WTC11 (cell line): ENCODE measurements at regions of chr5 and their contacts with region 1.

Region 1: DNA sequence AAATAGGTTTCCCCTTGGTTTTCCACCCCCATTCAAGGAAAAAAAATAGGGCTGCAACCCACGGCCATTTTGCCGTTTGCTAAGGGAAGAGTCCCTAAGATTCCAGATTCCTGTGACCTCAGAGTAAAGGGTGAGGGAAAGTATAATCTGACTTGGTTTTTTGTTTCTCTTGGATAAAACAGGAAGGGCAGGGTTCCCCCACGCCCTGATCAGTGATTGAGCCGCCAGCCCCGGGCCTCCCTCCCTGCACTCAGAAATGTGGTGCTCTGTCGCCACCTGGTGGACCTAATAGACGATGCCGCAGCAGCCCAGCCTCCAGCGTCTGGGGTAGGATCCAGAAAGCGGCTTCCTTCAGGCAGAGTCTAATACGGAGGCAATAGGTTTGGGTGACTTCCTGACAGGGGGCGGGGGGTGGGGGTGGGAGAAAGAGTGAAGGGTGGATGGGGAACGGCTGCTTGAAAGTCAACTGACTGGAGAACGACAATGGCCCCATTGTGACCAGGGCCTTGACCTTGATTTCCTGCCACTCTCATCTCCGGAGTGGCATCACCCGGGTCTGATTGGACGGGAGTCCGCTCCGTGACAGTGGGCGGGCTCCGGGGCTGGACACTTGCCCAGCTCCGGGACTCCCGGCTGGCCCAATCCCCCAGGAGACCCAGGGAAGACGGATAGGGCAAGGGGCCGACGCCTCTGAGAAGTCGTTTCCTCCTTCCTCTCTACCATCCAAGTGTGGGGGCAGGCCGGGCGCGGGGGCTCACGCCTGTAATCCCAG is 17.8 kb upstream of the CYSTM1 start:
- DNase-seq: peak; percentile 94
- ATAC-seq: peak; percentile 91
- H3K4me3 Mint-ChIP-seq: peak overlapping the region; percentile 67
- H3K27ac Mint-ChIP-seq: no peak overlapping the region
- H3K4me1 Mint-ChIP-seq: peaks cover 28% of the 10 kb centered on the region
- H3K27me3 Mint-ChIP-seq: peaks cover 17% of the 10 kb centered on the region
- CTCF ChIP-seq: peak; percentile 86

Region 2: GRCh38 chr5:140042643-140043500 is 114.3 kb before region 1 on chr5 and contains the start of gene NRG2:
- CTCF ChIA-PET with region 1: no interaction called
- POLR2A ChIA-PET with region 1: no interaction called
- DNase-seq: peak; percentile 88
- ATAC-seq: peak; percentile 89
- H3K4me3 Mint-ChIP-seq: peak within 1 kb of the TSS; percentile 70
- H3K27ac Mint-ChIP-seq: no peak within 1 kb of the TSS
- H3K4me1 Mint-ChIP-seq: peaks cover 28% of the 10 kb centered on the region
- H3K27me3 Mint-ChIP-seq: peaks cover 86% of the 10 kb centered on the region
- CTCF ChIP-seq: no peak
- total RNA-seq, gene NRG2: 0.44 to 0.73 TPM (median 0.46 TPM) in 3 replicates

Region 3: DNA sequence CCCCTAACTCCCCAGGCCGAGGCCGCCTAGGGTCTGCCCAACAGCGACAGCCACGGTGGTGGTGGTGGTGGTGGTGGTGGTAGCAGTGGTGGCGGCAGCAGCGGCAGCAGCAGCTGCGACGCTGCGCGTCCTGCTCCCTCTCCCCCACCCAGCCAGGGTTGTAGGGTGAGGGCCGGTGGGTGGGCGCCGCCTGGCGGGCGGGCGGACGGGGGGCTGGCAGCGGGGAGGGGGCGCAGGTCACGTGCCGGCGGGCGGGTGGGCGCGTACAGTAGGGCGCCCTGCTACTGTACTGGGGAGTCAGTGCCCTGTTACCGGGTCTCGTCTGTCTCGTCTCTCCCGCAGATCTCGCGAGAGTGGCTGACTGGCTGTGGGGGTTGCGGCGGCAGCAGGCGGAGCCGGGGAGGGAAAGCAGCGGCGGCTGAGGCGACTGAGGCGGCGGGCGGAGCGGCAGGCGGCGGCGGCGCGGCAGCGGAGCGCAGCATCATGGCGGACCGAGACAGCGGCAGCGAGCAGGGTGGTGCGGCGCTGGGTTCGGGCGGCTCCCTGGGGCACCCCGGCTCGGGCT is 43.4 kb before region 1 on chr5 and contains the start of gene PURA:
- CTCF ChIA-PET with region 1: interaction called, 10 read pairs
- POLR2A ChIA-PET with region 1: no interaction called
- DNase-seq: peak; percentile 96
- ATAC-seq: peak; percentile 85
- H3K4me3 Mint-ChIP-seq: peak within 1 kb of the TSS; percentile 86
- H3K27ac Mint-ChIP-seq: peak within 1 kb of the TSS; percentile 73; the same call in 1 of the 2 replicates
- H3K4me1 Mint-ChIP-seq: peaks cover 73% of the 10 kb centered on the region
- H3K27me3 Mint-ChIP-seq: peaks cover 77% of the 10 kb centered on the region
- CTCF ChIP-seq: no peak; the same call in 1 of the 2 replicates
- total RNA-seq, gene PURA: 6.0 to 9.0 TPM (median 6.4 TPM) in 3 replicates